Activated naive CD4-positive, alpha-beta T cell treated with anti-CD3 and anti-CD28 coated beads for 36 hours (primary cell): ENCODE measurements at regions of chr10 and their contacts with region 1.

Region 1: GRCh38 chr10:73772280-73773151 is 9.3 kb upstream of the CHCHD1 start:
- DNase-seq: peak; percentile 81
- H3K4me3 Mint-ChIP-seq: peak overlapping the region; percentile 93
- H3K27ac Mint-ChIP-seq: peak overlapping the region; percentile 93
- H3K4me1 Mint-ChIP-seq: peaks cover 44% of the 10 kb centered on the region
- H3K27me3 Mint-ChIP-seq: no peaks in the 10 kb centered on the region

Region 2: GRCh38 chr10:73591935-73592699 is 180.4 kb before region 1 on chr10:
- CTCF ChIA-PET with region 1: no interaction called
- intact Hi-C with region 1: no loop called
- DNase-seq: peak; percentile 59
- H3K4me3 Mint-ChIP-seq: no peak overlapping the region
- H3K27ac Mint-ChIP-seq: peak overlapping the region; percentile 71
- H3K4me1 Mint-ChIP-seq: peaks cover 17% of the 10 kb centered on the region
- H3K27me3 Mint-ChIP-seq: no peaks in the 10 kb centered on the region

Region 3: DNA sequence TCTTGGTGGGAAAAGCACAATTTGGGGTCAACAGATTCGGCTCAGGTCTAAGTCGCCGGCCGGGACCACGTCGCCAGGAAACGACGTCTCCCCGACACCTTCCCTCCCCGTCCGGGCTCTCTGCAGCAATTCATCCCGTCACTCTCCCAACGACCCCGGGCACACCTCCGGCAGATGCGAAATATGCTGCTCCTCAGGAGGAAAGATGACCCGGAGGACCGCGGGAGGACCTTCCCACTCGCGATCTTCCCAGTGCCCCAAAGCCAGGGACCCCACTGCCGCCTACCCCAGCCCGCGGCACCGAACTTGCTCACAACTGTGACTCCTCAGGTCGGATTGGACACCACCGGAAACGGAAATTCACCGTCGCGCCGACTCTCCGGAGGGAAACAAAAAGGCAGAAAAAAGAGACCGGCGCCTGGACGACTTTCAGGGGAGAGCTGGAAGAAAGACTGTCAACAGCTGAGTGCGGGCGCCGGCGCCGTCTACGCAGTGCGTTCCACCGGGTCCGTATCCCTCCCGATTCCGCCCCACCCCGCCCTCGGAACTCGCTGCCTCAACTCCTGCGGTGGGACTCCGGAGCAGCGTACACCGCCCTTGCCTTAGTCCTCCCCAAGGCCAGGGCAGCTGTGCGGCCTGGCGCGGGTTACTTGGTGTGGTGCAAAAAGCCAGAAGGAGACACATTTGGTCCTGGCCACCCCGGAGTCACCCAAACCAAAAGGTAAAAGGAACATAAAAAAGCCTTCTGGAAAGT is 42.2 kb before region 1 on chr10:
- CTCF ChIA-PET with region 1: interaction called, 4 read pairs
- intact Hi-C with region 1: loop called (anchors 1 kb)
- DNase-seq: peak; percentile 95
- H3K4me3 Mint-ChIP-seq: peak overlapping the region; percentile 91
- H3K27ac Mint-ChIP-seq: peak overlapping the region; percentile 97
- H3K4me1 Mint-ChIP-seq: peaks cover 16% of the 10 kb centered on the region
- H3K27me3 Mint-ChIP-seq: no peaks in the 10 kb centered on the region

Region 4: DNA sequence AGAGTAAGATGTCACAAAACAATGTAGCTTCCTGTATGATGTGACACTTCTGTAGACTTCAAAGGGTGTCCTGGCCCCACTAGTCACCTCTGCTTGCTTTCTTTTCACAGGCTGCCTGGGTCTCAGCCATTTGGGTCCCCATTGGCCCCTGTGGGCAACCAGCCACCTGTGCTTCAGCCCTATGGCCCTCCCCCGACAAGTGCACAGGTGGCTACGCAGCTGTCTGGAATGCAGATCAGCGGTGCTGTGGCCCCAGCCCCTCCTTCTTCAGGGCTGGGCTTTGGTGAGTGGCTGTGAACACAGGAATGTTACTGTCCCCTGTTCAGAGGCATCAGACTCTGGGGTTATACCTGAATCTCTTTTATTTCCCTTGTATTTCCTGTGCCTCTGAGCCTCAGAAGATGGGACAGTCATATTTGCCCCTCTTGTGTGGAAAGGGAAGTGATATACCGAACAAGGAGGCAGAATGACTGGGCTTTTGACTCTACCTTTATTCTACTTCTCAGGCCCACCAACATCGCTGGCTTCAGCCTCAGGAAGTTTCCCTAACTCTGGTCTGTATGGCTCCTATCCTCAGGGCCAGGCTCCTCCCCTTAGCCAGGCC is 12.9 kb before region 1 on chr10:
- CTCF ChIA-PET with region 1: interaction called, 10 read pairs
- intact Hi-C with region 1: loop called (anchors 1 kb)
- DNase-seq: peak; percentile 73
- H3K4me3 Mint-ChIP-seq: no peak overlapping the region
- H3K27ac Mint-ChIP-seq: peak overlapping the region; percentile 82
- H3K4me1 Mint-ChIP-seq: peaks cover 57% of the 10 kb centered on the region
- H3K27me3 Mint-ChIP-seq: no peaks in the 10 kb centered on the region

Region 5: GRCh38 chr10:73785221-73785720 is 12.8 kb after region 1 on chr10 and contains the start of gene ZSWIM8:
- CTCF ChIA-PET with region 1: interaction called, 17 read pairs
- intact Hi-C with region 1: loop called (anchors 1 kb)
- DNase-seq: peak; percentile 89
- H3K4me3 Mint-ChIP-seq: peak within 1 kb of the TSS; percentile 98
- H3K27ac Mint-ChIP-seq: peak within 1 kb of the TSS; percentile 97
- H3K4me1 Mint-ChIP-seq: peaks cover 42% of the 10 kb centered on the region
- H3K27me3 Mint-ChIP-seq: no peaks in the 10 kb centered on the region
- total RNA-seq, gene ZSWIM8: 25.8 to 26.7 TPM

Region 6: GRCh38 chr10:73810735-73811465 is 38.4 kb after region 1 on chr10:
- CTCF ChIA-PET with region 1: interaction called, 4 read pairs
- intact Hi-C with region 1: loop called (anchors 1 kb)
- DNase-seq: peak; percentile 63
- H3K4me3 Mint-ChIP-seq: peak overlapping the region; percentile 93
- H3K27ac Mint-ChIP-seq: peak overlapping the region; percentile 99
- H3K4me1 Mint-ChIP-seq: peaks cover 47% of the 10 kb centered on the region
- H3K27me3 Mint-ChIP-seq: no peaks in the 10 kb centered on the region

Region 7: DNA sequence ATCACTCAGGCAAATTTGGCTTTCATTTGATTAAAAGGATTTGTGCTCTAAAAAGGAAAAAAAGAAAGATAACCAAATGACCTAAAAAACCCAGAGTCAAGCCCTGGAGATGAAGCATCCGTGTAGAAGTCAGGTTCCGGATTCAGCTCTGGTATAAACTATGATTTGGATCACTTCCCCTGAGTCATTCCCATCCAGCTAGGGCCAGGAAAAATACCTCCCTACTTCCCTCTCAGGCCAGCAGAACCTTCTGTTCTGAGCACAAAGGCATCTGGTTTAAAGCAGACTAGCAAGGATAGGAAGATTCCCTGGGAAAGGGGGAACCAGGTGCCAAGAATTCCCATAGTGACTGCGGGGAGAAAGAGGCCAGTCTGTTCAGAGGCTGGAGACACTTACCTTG is 64.6 kb after region 1 on chr10:
- CTCF ChIA-PET with region 1: no interaction called
- intact Hi-C with region 1: no loop called
- DNase-seq: no peak
- H3K4me3 Mint-ChIP-seq: no peak overlapping the region
- H3K27ac Mint-ChIP-seq: no peak overlapping the region
- H3K4me1 Mint-ChIP-seq: no peaks in the 10 kb centered on the region
- H3K27me3 Mint-ChIP-seq: no peaks in the 10 kb centered on the region

Region 8: GRCh38 chr10:73931767-73932619 is 159.5 kb after region 1 on chr10:
- CTCF ChIA-PET with region 1: no interaction called
- intact Hi-C with region 1: loop called (anchors 5 kb)
- DNase-seq: peak; percentile 92
- H3K4me3 Mint-ChIP-seq: no peak overlapping the region
- H3K27ac Mint-ChIP-seq: peak overlapping the region; percentile 83
- H3K4me1 Mint-ChIP-seq: peaks cover 15% of the 10 kb centered on the region
- H3K27me3 Mint-ChIP-seq: peaks cover 7% of the 10 kb centered on the region

Region 9: DNA sequence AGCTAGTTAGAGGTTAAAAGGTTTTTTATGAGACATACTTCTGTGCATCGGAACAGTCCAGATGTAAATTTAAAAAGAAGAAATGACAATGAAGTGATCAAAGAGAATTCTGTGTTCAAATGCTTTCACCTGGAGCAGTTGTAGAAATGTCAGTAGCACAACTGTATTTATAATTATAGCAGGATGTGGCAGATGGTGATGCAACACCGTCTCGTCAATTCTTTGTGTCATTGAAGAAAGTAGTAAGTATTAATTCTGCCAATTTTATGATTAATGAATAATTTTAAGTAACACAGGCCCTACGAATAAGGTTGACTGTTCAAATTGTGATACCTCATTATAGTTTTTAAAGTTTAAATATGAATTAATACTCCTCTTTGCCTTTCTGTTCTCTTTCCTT is 549.6 kb after region 1 on chr10:
- CTCF ChIA-PET with region 1: no interaction called
- intact Hi-C with region 1: no loop called
- DNase-seq: no peak
- H3K4me3 Mint-ChIP-seq: no peak overlapping the region
- H3K27ac Mint-ChIP-seq: no peak overlapping the region
- H3K4me1 Mint-ChIP-seq: no peaks in the 10 kb centered on the region
- H3K27me3 Mint-ChIP-seq: no peaks in the 10 kb centered on the region